ENCODE measurements at regions of chr1 and their contacts with region 1.

Region 1: DNA sequence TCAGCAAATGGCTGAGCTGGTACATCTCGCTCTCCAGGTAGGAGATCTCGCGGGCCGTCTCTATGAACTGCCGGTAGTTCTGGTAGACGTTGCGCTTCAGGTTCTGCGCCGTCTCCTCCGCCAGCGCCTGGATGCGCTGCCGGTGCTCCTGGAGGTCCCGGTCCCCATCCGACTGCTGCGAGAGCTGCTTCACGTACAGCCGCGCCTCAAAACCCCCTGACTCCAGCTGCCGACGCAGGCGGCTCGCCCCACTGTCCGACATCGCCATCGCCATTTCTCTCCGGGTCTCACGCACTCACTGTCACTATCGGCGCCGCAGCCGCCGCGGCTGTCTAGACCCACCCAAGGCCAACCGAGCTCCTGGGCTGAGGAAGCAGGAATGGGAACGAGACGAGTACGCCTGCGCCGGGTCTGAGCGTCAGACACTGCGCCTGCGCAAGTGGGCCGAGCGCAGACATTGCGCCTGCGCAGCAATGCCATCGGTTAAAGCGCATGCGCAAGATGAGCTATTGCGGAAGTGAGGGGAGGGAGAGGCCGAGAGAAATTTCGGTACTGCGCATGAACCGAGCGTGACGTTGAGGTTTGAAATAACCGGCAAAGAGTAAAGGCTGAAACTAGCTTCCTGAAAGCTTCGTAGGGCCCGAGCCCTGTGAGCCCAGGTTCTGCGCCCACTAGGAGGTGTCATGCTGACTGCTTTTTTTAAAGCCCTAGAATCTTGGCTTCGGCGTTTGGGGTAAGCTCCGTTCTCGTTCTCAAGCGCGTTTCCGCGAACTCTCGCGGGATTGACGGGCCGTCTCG is at the start of gene EXOC8:
- DNase-seq: peak; percentile 87 to 98 (median 94)

Region 2: DNA sequence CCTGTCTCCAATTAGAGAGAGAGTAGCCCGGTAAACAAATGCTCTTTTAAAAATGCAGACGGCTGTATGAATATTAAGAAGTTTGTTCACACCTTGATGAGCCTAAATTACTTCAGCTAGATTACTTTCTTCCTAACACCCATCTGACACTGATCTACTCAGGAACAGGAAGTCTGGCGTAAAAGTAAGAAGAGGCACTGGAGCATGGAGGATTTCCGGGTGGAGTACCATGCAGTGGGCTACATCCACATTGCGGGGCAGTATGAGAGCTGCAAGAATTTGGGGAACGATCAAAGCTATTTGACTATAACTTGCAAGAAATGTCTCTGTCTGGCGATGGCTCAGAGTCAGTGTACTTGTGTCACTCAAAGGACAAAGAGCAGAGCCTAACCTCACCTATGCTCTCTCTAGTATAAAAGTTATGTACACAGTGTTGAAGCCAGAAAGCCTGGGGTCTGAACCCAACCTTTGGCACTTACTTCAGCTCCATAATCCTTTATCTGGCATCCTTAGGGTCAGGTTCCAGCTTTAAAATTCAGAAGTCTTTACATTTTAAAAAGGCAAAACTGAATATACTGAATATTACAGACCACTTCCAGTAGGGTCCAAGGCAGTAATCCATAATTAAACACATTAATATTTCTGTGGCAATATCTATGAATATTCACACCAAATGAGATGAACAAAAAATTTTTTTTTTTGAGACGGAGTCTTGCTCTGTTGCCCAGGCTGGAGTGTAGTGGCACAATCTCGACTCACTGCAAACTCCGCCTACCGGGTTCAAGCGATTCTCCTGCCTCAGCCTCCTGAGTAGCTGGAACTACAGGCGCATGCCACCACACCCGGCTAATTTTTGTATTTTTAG is 104.6 kb before region 1 on chr1:
- intact Hi-C with region 1: loop called (anchors 10 kb)
- DNase-seq: no peak

Region 3: DNA sequence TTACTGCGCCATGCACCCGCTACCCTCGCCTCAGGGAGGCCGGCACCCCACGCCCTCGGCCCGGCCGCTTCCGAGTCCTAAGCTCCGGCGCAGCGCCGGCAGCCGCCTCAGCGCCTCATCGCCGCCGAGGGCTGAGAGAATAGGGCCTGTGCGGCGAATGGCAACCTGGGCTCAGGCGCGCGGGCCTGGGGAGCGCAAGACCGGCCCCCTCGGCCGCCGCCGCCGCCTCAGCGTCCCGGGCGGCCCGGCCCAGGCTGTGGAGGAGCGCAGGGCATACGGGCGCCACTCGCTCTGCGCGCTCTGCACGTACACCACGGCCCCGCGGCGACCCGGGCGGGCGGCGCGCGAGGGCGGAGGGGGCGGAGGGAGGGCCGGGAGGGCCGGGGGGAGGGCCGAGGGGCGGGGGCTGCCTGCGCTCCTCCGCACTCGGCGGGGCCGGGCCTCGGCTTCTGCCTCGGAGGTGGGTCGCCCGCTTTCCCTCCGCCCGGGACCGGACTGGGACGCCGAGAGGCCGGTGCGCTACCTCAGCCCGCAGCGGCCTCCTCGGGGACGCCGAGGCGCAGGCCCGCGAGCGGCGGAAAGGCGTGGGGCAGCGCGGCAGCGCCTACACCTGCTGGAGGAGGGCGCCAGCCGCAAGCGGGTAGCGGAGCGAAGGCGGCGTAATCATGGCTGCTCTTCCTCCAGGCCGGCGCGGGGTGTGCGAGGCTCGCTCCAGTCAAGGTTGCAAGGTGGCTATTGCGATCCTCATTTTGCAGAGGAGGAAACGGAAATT is 84.5 kb after region 1 on chr1 and contains the start of gene EGLN1:
- intact Hi-C with region 1: loop called (anchors 5 kb)
- DNase-seq: peak; percentile 27 to 90 (median 82)

Region 4: DNA sequence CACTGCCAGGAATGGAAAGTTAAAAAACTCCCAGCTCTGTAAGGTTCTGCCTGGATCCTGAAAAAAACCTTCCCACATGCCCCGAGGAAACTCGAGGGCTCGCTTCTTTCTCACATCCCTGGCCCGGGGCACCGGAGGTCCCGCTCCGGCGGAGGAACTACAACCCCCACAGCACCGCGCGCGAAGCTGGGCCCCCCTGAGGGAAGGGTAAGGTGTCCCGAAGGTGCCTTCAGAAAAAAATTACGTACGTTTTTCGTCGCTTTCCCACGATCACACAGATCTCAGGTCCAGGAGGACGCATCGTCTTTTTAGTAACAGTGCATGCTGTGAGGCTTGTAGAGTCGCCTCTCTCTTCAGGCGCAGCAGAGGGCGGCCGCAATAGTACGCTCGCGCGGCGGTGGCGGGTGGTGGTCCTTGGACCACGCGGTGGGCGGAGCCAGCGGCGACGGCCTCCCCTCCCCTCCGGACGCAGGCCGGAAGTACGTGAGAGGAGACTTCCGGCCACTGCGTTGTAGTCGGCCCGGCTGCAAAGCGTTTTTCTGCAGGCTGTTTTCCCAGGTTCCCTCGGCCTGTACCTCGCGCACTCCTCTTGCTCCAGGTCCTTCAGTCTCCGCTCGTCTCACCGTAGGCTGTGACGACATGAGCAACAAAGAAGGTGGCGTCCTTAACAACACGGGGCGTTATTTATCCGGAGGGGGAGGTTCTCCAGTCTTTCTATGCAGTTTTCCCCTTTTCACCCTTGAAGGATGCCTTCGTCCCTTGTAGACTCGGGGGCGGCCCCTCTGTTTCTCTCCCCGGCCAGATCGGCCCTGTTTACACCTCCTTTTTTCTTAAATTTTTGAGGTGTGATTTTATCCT is 190.7 kb after region 1 on chr1 and contains the start of gene TSNAX:
- intact Hi-C with region 1: loop called (anchors 5 kb)
- DNase-seq: peak; percentile 75 to 95 (median 91)